ENCODE measurements at regions of chr4 and their contacts with region 1.

Region 1: DNA sequence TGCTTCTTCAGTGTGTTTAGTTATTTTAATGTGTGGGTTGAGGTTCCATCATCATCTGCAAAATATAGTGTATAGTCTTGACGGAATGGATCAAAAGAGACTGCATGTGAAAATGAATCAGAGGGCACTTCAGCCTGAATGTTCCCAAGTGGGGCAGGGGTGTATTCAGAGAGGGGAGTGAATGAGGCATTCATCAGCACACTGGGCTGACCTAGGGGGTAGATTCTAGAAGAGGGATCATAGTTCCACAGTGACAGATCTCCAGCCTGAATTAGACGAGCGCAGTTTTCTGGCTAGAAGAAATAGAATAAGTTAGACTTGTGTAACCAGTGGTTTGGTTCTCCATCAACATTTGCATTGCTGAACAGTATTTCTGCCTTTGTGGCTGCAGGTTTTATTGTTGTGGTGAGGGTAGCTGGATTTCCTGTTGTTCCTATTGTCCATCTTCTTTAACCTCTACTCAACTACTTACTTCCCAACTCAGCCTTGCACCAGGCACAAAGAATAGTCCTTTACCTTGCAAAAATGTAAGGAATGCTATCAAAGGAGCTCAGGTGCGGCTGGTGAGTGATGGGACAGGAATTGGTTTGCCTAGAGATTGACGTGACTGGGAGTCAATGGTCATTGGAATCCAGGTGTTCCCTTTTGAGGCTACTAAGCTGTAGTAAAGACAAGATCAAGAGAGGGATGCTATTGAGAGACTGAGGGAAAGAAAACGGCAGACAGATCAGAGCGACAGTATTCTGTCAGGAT is 50.9 kb downstream of the NAP1L5 start:
- DNase-seq: no peak
- ATAC-seq: no peak
- H3K4me3 ChIP-seq: no peak overlapping the region
- H3K4me3 Mint-ChIP-seq: peak overlapping the region in 1 of 3 donors; percentile 15
- H3K27ac ChIP-seq: no peak overlapping the region
- H3K27ac Mint-ChIP-seq: peak overlapping the region; percentile 30 to 48
- H3K4me1 ChIP-seq: peaks cover 2 to 4% of the 10 kb centered on the region in 2 experiments
- H3K4me1 Mint-ChIP-seq: peaks cover 62 to 75% (median 65%) of the 10 kb centered on the region in 3 donors
- H3K27me3 ChIP-seq: no peaks in the 10 kb centered on the region
- H3K27me3 Mint-ChIP-seq: no peaks in the 10 kb centered on the region

Region 2: GRCh38 chr4:88429401-88429800 is 217.3 kb before region 1 on chr4:
- CTCF ChIA-PET with region 1: no interaction called
- POLR2A ChIA-PET with region 1: no interaction called
- DNase-seq: no peak
- ATAC-seq: no peak
- H3K4me3 ChIP-seq: no peak overlapping the region
- H3K4me3 Mint-ChIP-seq: no peak overlapping the region
- H3K27ac ChIP-seq: no peak overlapping the region
- H3K27ac Mint-ChIP-seq: no peak overlapping the region
- H3K4me1 ChIP-seq: no peaks in the 10 kb centered on the region
- H3K4me1 Mint-ChIP-seq: no peaks in the 10 kb centered on the region
- H3K27me3 ChIP-seq: no peaks in the 10 kb centered on the region
- H3K27me3 Mint-ChIP-seq: no peaks in the 10 kb centered on the region

Region 3: DNA sequence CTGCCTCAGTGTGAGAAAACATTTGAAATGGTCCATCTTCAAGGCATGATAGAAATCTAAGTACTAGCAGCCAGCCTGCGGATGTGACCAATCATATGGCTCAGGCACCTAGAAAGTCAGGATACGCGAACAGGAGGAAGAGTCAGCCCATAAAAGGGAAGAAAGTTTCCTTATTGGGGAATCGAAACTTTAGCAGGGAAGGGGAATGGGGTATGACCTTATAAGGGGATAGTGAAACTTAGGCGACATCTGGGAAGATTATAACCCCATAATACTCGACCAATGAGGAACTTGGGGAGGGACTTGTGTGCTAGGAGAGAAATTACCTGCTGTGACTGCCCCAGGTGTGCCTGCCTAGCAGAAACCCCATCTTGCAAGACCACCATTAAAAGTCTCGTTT is 96.9 kb before region 1 on chr4:
- CTCF ChIA-PET with region 1: interaction called in 1 of 2 experiments, 12 read pairs
- POLR2A ChIA-PET with region 1: no interaction called
- DNase-seq: no peak
- ATAC-seq: no peak
- H3K4me3 ChIP-seq: no peak overlapping the region
- H3K4me3 Mint-ChIP-seq: no peak overlapping the region
- H3K27ac ChIP-seq: no peak overlapping the region
- H3K27ac Mint-ChIP-seq: no peak overlapping the region
- H3K4me1 ChIP-seq: no peaks in the 10 kb centered on the region
- H3K4me1 Mint-ChIP-seq: no peaks in the 10 kb centered on the region
- H3K27me3 ChIP-seq: no peaks in the 10 kb centered on the region
- H3K27me3 Mint-ChIP-seq: no peaks in the 10 kb centered on the region

Region 4: DNA sequence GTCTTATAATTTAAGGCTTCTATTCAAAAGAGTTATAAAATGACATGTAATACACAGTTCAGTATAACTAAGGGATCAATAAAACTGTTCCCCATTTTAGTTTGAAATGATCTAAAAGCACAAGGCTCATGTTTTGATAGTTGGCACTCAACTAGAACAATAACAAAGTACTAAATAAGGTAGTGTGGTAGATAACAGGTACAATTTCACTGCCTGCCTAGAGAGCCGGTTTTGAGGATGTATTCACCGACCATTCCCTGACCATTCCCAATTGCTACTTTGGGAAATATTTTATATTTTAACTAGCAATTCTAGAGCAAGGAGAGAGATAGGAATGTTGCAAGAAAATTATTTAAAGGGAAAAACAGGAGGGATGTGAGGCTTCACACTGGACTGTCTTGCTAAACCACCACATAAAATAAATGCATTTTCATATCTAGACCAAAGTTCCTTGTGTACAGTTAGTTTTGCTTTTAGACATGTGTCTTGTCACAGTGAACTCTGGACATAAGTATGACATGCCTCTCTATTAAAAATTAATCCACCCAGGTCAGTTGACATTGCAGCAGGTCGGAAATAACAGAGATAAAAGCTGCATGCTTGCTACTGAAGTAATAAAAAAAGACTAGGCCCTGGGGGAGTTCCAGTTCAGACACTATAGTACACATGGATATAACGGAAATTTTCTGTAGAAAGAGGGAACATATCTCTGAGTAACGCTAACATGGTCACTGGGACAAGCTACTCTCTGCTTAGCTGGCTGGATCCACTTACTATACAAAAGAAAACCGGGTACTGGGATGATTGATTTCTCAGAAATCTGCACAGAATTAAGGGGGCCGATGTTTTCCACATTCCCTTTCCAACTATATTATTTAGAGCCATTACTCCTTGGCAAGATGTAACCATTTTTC is 107.2 kb after region 1 on chr4:
- CTCF ChIA-PET with region 1: no interaction called
- POLR2A ChIA-PET with region 1: no interaction called
- DNase-seq: no peak
- ATAC-seq: no peak
- H3K4me3 ChIP-seq: no peak overlapping the region
- H3K4me3 Mint-ChIP-seq: no peak overlapping the region
- H3K27ac ChIP-seq: no peak overlapping the region
- H3K27ac Mint-ChIP-seq: no peak overlapping the region
- H3K4me1 ChIP-seq: no peaks in the 10 kb centered on the region
- H3K4me1 Mint-ChIP-seq: no peaks in the 10 kb centered on the region
- H3K27me3 ChIP-seq: no peaks in the 10 kb centered on the region
- H3K27me3 Mint-ChIP-seq: no peaks in the 10 kb centered on the region